Activated T-helper 1 cell treated with anti-CD3 and anti-CD28 coated beads, Interleukin-12 subunit alpha, Interleukin-12 subunit beta, Interleukin-2, Interleukin-4 antibody, amounts not matched to agents 30 ng/mL and 10 ng/mL and 1 ng/mL, durations not matched to agents 14 hours and 24 hours and 36 hours (primary cell): ENCODE measurements at regions of chrX and their contacts with region 1.

Region 1: GRCh38 chrX:46758906-46759644 is at the start of gene SLC9A7:
- DNase-seq: peak; percentile 74
- H3K4me3 Mint-ChIP-seq: peak within 1 kb of the TSS; percentile 99
- H3K27ac Mint-ChIP-seq: peak within 1 kb of the TSS; percentile 95
- H3K4me1 Mint-ChIP-seq: peaks cover 9% of the 10 kb centered on the region
- H3K27me3 Mint-ChIP-seq: peaks cover 7% of the 10 kb centered on the region
- total RNA-seq, gene SLC9A7: 36.9 and 39.6 TPM in 2 replicates

Region 2: DNA sequence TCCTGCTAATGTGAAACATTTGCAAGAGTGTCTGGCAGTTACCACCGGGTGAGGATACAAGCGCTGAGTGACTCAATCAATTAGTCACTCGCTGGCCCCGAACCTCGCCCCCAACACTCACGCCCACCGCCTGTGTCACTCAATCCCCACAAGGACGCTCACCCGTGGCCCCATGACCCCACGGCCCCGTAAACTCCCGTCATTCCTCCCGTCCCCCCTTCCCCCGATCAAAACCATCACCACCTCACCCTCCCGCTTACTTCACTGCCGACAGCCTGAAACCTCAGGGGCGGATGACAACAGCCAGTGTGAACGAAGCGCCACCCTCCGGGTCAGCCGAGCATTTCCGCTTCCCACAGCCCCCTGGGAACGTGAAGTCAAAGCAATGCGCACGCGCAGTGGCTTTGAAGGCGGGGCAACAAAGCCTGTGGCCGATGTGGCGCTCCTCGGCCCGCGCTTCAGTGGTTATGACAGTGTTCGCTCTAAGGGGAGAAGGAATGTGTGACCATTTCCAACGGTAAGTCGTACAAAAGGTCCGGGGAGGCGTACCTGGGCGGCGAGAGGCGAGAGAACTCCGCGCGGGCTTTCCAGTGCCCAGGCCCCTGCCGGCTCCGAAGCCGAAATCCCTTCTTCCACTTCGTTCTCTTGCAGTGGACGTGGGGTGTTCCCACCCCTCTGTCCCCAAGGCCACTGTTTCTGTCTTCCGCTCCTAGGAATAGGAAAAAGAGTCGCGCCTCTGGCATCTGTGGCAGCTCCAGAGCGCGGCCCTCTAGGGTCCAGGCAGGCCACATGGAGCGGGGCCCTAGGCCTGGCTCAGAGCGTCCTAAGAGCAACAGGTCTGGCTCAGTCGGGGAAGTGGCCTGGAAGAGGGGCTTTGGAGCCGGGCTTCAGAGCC is 213.7 kb before region 1 on chrX and contains the start of gene ZNF674:
- intact Hi-C with region 1: loop called (anchors 5 kb)
- DNase-seq: peak; percentile 90
- H3K4me3 Mint-ChIP-seq: peak within 1 kb of the TSS; percentile 97
- H3K27ac Mint-ChIP-seq: peak within 1 kb of the TSS; percentile 97
- H3K4me1 Mint-ChIP-seq: peaks cover 36% of the 10 kb centered on the region
- H3K27me3 Mint-ChIP-seq: no peaks in the 10 kb centered on the region
- total RNA-seq, gene ZNF674: 1.8 and 3.5 TPM in 2 replicates

Region 3: GRCh38 chrX:46686003-46686645 is 73.0 kb before region 1 on chrX:
- intact Hi-C with region 1: loop called (anchors 2 kb)
- DNase-seq: peak; percentile 4
- H3K4me3 Mint-ChIP-seq: no peak overlapping the region
- H3K27ac Mint-ChIP-seq: no peak overlapping the region
- H3K4me1 Mint-ChIP-seq: peaks cover 38% of the 10 kb centered on the region
- H3K27me3 Mint-ChIP-seq: no peaks in the 10 kb centered on the region

Region 4: GRCh38 chrX:46704767-46705386 is 54.2 kb before region 1 on chrX:
- intact Hi-C with region 1: no loop called
- DNase-seq: peak; percentile 32
- H3K4me3 Mint-ChIP-seq: peak overlapping the region; percentile 64
- H3K27ac Mint-ChIP-seq: peak overlapping the region; percentile 88
- H3K4me1 Mint-ChIP-seq: peaks cover 58% of the 10 kb centered on the region
- H3K27me3 Mint-ChIP-seq: no peaks in the 10 kb centered on the region

Region 5: DNA sequence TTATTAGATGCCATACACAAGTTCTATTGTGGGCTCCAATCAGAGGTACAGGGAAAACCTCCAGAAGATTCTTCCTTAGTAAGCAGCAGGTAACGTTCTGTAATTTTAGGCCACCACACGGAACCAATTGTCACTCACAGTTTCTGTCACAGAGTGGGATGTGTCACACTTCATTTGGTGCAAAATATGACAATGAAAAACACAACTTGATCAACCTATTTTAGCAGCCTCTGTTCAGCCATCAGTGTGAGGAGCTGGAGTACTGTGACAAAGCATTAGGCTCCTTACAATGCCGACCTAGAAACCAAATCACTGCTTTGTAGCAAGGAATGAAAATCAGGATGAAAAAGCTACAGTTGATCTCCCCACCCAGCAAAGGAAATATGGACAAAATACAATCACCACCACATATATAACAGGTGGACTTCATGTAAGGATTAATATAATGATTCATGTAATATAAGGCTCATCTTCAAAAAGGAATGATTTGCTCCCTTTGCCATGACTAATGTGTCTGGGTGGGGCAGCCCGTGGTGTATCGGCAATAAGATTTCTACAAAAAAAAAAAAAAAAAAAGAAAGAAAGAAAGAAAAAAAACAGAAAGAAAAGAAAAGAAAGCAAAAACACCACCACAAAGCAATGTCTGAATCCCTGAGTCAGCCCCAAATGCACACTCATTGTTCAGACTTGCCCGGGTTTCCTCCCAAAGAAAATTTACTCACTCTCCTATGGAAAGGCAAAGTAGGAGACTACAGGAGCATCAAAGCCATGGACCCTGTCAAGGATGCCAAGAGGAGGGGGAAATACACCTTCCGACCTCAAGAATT is 36.1 kb before region 1 on chrX:
- intact Hi-C with region 1: no loop called
- DNase-seq: no peak
- H3K4me3 Mint-ChIP-seq: no peak overlapping the region
- H3K27ac Mint-ChIP-seq: no peak overlapping the region
- H3K4me1 Mint-ChIP-seq: peaks cover 29% of the 10 kb centered on the region
- H3K27me3 Mint-ChIP-seq: no peaks in the 10 kb centered on the region

Region 6: GRCh38 chrX:46782034-46782433 is 23.0 kb after region 1 on chrX:
- intact Hi-C with region 1: loop called (anchors 1 kb)
- DNase-seq: no peak
- H3K4me3 Mint-ChIP-seq: no peak overlapping the region
- H3K27ac Mint-ChIP-seq: no peak overlapping the region
- H3K4me1 Mint-ChIP-seq: peaks cover 11% of the 10 kb centered on the region
- H3K27me3 Mint-ChIP-seq: no peaks in the 10 kb centered on the region

Region 7: DNA sequence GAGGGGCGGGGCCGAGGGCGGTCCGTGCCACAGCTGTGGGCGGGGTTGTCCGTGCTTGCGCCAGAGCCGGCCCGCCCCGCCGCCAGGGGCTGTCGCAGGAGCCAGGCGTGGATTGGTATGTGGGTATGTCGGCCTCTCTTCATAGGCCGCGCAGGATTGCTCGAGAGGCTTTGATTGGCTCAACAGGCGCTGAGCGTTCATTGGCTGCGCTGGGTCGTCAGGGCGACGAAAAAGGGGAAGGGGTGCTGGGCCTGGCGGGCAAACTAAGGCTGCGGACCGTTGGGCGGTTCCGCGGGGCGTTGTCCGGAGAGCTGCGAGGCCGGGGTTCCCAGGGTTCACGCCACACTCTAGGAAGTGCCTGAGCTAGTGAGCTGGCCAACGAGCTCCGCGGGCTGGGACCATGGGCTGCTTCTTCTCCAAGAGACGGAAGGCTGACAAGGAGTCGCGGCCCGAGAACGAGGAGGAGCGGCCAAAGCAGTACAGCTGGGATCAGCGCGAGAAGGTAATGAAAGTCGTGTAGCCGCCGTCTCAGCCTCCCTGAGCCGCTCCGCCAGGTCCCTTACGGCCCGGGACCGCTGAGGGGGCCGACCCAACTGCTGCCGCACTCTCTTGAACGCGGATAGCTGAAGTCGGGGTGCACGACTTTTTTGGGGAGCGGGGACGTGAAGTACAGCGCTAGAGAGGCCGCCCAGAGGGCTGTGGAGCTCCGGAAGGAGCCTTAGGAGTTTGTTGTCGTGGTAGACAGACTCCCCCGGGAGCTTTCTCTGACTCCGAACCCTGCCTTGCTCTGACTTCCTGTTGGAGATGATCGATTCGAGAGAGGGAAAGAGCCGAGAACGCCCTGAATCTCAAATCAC is 77.9 kb after region 1 on chrX and contains the start of gene RP2:
- intact Hi-C with region 1: loop called (anchors 2 kb)
- DNase-seq: peak; percentile 79
- H3K4me3 Mint-ChIP-seq: peak within 1 kb of the TSS; percentile 96
- H3K27ac Mint-ChIP-seq: peak within 1 kb of the TSS; percentile 89
- H3K4me1 Mint-ChIP-seq: no peaks in the 10 kb centered on the region
- H3K27me3 Mint-ChIP-seq: peaks cover 4% of the 10 kb centered on the region
- total RNA-seq, gene RP2: 7.1 and 7.5 TPM in 2 replicates

Region 8: GRCh38 chrX:47030339-47030738 is 271.3 kb after region 1 on chrX:
- intact Hi-C with region 1: loop called (anchors 2 kb)
- DNase-seq: no peak
- H3K4me3 Mint-ChIP-seq: no peak overlapping the region
- H3K27ac Mint-ChIP-seq: no peak overlapping the region
- H3K4me1 Mint-ChIP-seq: no peaks in the 10 kb centered on the region
- H3K27me3 Mint-ChIP-seq: no peaks in the 10 kb centered on the region